Activated CD4-positive, alpha-beta T cell treated with anti-CD3 and anti-CD28 coated beads, Interleukin-2, amount 10 ng/mL, durations not matched to agents 7 days and 5 days (primary cell): ENCODE measurements at regions of chr10 and their contacts with region 1.

Region 1: DNA sequence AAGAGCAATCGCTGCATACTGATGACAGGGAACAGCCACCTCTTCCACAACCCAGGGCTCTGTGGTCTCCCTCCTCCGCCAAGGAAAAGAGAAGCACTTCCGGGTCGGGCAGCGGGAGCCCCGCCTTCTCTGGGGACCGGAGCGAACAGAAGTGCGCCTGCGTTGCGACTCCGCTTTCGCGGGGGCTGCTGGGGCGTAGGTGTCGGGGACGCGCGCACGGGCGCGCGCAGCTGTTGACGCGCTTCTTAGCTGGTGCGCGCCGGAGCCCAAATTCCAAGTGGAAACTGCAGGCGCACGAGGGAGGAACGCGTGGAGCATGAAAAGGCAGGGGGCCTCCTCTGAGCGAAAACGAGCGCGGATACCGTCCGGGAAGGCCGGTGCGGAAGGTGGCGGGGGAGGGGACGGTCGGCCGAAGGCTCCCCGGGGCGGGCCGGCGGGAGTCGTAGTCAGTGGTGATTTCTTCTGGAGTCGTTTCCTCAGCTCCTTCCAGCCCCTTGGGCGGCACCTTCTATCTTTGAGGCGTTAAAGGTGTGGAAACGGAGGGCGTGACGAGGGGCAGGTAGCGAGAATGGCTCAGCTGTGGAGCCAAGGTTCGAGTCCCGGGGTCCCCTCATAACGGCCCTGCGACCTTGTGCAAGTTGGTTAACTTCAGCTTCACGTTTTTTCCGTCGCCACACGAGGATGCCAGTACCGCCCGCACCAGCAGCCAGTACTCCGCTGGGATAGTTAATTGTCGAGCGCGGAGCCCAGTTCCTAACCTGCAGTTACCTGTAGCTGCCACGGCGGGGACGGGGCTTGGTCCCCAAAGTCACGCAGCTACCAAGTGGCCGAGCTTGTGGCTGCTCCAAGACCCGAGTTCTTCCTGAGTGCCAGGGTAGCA is at the starts of genes COX15 and CUTC:
- DNase-seq: peak; percentile 96
- H3K4me3 Mint-ChIP-seq: peak within 1 kb of the TSS; percentile 100
- H3K27ac Mint-ChIP-seq: peak within 1 kb of the TSS; percentile 99
- H3K4me1 Mint-ChIP-seq: peaks cover 25% of the 10 kb centered on the region
- H3K27me3 Mint-ChIP-seq: no peaks in the 10 kb centered on the region
- total RNA-seq, gene COX15: 40.3 to 40.6 TPM
- total RNA-seq, gene CUTC: 20.2 to 21.3 TPM

Region 2: GRCh38 chr10:99742701-99743100 is 10.4 kb after region 1 on chr10:
- CTCF ChIA-PET with region 1: interaction called, 25 read pairs
- POLR2A ChIA-PET with region 1: no interaction called
- DNase-seq: no peak
- H3K4me3 Mint-ChIP-seq: no peak overlapping the region
- H3K27ac Mint-ChIP-seq: no peak overlapping the region
- H3K4me1 Mint-ChIP-seq: peaks cover 2% of the 10 kb centered on the region
- H3K27me3 Mint-ChIP-seq: no peaks in the 10 kb centered on the region